H1 (cell line): ENCODE measurements at regions of chr1 and their contacts with region 1.

Region 1: DNA sequence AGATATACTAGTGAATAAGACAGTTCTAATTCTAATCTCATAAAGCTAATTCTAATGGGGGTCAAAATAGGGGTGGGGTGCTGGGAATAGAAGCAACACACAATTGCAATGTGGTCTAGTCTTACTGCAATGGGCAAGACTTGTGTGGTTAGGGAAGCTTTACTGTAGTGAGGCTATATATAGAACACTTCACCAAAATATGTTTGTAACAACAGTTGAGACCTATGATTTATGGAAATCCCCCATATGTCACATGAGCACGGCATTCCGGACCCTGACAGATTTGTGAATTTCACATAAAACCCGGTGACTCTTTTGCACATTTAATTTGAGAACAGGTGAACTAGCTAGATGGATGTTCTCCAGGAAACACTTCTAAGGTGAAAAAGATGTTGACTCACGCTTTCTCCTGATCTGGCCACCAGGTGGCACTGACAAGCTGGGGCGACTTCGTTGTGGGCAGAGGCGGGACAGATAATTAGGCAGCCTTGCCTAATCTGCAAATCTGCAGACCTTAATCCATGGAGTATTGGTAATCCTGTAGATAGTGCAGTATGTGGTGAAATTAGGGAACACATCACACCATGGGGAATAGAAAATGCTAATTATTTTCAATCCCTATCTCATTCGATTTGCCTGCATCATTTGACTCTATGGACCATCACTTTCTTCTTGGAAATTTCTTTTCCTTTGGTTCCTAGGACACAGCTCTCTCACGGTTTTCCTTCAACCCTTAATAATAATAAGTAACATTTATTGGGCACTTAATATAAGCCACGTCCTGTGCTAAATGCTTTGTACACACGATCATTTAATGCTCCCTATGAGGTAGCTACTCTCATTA is 37.7 kb downstream of the KIAA0040 start:
- DNase-seq: peak in 1 of 2 experiments; percentile 87
- H3K4me3 ChIP-seq: no peak overlapping the region
- H3K27ac ChIP-seq: no peak overlapping the region
- H3K4me1 ChIP-seq: peaks cover 0 to 2% (median under 1%) of the 10 kb centered on the region in 4 experiments; a peak in 1 of 7 replicates
- H3K27me3 ChIP-seq: peaks cover 0 to 2% (median 0%) of the 10 kb centered on the region in 4 experiments; a peak in 3 of 7 replicates
- CTCF ChIP-seq: peak; percentile 84 to 92 (median 91)
- EP300 ChIP-seq: no peak
- POLR2A ChIP-seq: no peak
- RAD21 ChIP-seq: peak; percentile 92 to 95

Region 2: GRCh38 chr1:175015243-175015642 is 139.6 kb before region 1 on chr1:
- CTCF ChIA-PET with region 1: no interaction called
- POLR2A ChIA-PET with region 1: no interaction called
- DNase-seq: no peak
- H3K4me3 ChIP-seq: no peak overlapping the region
- H3K27ac ChIP-seq: no peak overlapping the region
- H3K4me1 ChIP-seq: no peaks in the 10 kb centered on the region
- H3K27me3 ChIP-seq: no peaks in the 10 kb centered on the region
- CTCF ChIP-seq: no peak
- EP300 ChIP-seq: no peak
- POLR2A ChIP-seq: no peak
- RAD21 ChIP-seq: no peak

Region 3: DNA sequence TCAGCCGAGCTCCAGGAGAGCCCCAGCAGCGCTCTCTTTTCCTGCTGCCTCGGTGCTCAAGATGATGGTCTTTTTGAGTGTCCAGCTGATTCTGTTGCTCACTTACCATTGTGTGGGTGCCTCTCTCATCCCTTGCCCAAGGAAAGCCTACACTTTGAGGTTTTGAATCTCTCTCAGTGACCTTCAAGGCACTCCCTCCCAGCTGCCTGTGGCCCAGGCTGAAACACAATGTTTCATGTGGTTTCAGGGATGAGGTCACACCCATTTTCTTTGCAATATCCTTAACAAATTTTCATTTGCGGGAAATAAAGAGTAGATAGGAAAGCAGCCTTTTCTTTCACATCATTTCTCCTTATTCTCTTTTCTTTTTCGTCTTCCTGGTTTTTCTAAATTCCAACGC is 119.0 kb before region 1 on chr1:
- CTCF ChIA-PET with region 1: interaction called, 52 read pairs
- POLR2A ChIA-PET with region 1: no interaction called
- DNase-seq: no peak
- H3K4me3 ChIP-seq: no peak overlapping the region
- H3K27ac ChIP-seq: no peak overlapping the region
- H3K4me1 ChIP-seq: peaks cover 0 to 6% (median 2%) of the 10 kb centered on the region in 4 experiments; a peak in 3 of 7 replicates
- H3K27me3 ChIP-seq: no peaks in the 10 kb centered on the region; a peak in 1 of 7 replicates
- CTCF ChIP-seq: no peak
- EP300 ChIP-seq: no peak
- POLR2A ChIP-seq: no peak
- RAD21 ChIP-seq: no peak

Region 4: GRCh38 chr1:175138579-175138978 is 16.3 kb before region 1 on chr1:
- CTCF ChIA-PET with region 1: interaction called, 45 read pairs
- POLR2A ChIA-PET with region 1: no interaction called
- DNase-seq: no peak
- H3K4me3 ChIP-seq: no peak overlapping the region
- H3K27ac ChIP-seq: no peak overlapping the region
- H3K4me1 ChIP-seq: no peaks in the 10 kb centered on the region
- H3K27me3 ChIP-seq: no peaks in the 10 kb centered on the region
- CTCF ChIP-seq: no peak
- EP300 ChIP-seq: no peak
- POLR2A ChIP-seq: no peak
- RAD21 ChIP-seq: no peak

Region 5: DNA sequence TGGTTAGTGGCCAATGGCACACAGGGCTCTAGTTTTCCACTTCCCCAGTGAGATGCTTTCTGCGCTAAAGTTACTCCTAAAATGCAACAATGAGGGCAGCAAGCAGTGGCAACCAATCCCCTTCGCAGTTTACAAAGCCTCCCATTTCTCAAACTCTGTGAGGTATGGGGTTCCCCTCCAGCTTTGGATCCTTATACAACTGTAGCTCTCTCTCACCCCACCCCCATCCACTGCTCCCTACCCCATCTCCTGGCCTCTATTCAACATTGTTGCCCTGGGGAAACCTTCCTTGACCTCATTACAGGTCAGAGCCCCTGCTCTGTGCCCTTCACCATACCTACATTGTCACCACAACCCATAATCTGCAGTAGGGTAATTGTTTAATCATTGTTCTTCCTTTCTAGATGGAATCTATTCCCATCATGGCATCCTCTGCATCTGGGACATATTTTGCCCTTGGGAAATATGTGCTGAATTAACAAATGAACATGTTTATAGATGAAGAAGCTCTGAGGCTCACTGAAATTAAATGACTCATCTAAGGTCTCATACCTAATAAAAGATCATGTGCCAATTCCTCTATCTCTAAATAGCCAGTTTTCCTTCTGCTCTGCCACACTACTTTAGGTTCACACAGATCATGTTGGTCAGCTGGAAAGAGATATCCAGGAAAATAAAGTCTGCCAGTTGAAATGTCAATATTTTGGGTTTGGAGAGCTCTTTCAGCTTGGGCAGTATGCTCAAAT is 25.2 kb after region 1 on chr1:
- CTCF ChIA-PET with region 1: interaction called, 35 read pairs
- POLR2A ChIA-PET with region 1: interaction called, 3 read pairs
- DNase-seq: no peak
- H3K4me3 ChIP-seq: no peak overlapping the region
- H3K27ac ChIP-seq: no peak overlapping the region
- H3K4me1 ChIP-seq: peaks cover 0 to 7% (median 3%) of the 10 kb centered on the region in 4 experiments; a peak in 3 of 7 replicates
- H3K27me3 ChIP-seq: no peaks in the 10 kb centered on the region
- CTCF ChIP-seq: no peak
- EP300 ChIP-seq: no peak
- POLR2A ChIP-seq: no peak
- RAD21 ChIP-seq: no peak

Region 6: GRCh38 chr1:175221666-175222175 is 66.9 kb after region 1 on chr1:
- CTCF ChIA-PET with region 1: interaction called, 43 read pairs
- POLR2A ChIA-PET with region 1: no interaction called
- DNase-seq: peak; percentile 21 to 57
- H3K4me3 ChIP-seq: peak overlapping the region in 1 of 4 experiments; percentile 3; a peak in 1 of 8 replicates
- H3K27ac ChIP-seq: no peak overlapping the region
- H3K4me1 ChIP-seq: peaks cover 2 to 12% (median 6%) of the 10 kb centered on the region in 4 experiments
- H3K27me3 ChIP-seq: no peaks in the 10 kb centered on the region; a peak in 1 of 7 replicates
- CTCF ChIP-seq: peak; percentile 14 to 33 (median 14); a peak in 3 of 4 replicates
- EP300 ChIP-seq: no peak
- POLR2A ChIP-seq: no peak
- RAD21 ChIP-seq: peak; percentile 55 to 61

Region 7: DNA sequence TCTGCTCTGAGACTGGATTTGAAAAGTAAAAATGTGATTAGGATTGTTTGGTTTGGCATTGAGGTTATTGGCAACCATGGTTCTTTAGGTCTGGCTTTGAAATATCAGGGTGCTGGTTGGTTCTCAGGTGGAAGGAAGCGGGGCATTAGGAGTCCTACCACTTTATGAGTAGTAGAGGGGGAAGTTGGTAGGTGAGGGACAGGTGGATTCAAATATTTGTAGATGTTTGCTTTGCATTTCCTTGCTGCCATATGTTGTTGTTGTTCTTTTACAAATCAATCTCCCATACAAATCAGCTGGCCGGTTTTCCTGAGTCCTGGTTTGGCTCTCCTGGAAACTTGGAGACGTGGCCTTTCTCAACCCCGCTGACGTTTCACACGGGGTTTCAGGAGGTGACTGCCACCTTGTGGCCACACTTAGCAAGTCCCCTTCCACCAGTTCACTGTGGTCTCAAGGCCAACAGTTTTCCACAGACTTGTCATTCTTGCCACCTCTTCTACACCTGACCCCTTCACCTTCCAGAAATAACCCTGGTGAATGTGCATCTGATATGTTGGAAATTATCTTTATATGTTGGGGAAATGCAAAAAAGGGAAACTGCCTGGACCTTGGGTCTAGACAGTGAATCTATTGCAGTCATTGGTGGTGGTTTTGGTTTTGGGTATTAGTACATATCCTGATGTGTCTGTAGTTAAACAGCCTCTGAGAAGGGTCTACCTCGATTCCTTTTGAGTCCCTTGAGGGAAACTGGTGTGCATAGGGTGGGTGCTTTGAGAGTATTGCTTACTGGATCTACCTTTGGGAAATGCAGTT is 164.8 kb after region 1 on chr1:
- CTCF ChIA-PET with region 1: interaction called, 260 read pairs
- POLR2A ChIA-PET with region 1: interaction called, 3 read pairs
- DNase-seq: peak; percentile 21 to 73
- H3K4me3 ChIP-seq: no peak overlapping the region
- H3K27ac ChIP-seq: no peak overlapping the region
- H3K4me1 ChIP-seq: no peaks in the 10 kb centered on the region
- H3K27me3 ChIP-seq: no peaks in the 10 kb centered on the region
- CTCF ChIP-seq: peak; percentile 89 to 96 (median 95)
- EP300 ChIP-seq: no peak
- POLR2A ChIP-seq: no peak
- RAD21 ChIP-seq: peak; percentile 90 to 91